GM10248 (cell line): ENCODE measurements at regions of chr18 and their contacts with region 1.

Region 1: GRCh38 chr18:48445540-48445939 is 36.4 kb upstream of the ZBTB7C start:
- DNase-seq: peak; percentile 62
- CTCF ChIP-seq: peak; percentile 92

Region 2: DNA sequence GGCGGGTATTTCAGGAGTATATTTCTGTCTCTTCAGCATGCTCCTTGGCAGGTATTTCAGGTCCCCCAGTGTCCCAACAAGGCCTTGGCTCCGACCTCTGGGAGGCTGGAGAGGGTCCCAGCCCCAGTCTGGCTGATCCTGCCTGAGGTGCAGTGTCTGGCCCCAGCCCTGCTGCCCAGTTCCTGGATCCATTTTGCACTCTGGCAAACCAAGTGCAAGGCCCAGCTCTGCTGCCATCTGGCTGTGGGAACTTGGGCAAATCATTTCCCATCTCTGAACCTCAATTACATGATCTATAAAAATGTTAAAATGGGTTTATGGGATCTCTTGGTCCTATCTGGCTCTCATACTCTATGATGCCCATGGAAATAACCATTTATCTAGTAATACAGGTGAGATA is 99.9 kb before region 1 on chr18:
- CTCF ChIA-PET with region 1: no interaction called
- POLR2A ChIA-PET with region 1: no interaction called
- DNase-seq: no peak
- CTCF ChIP-seq: no peak

Region 3: DNA sequence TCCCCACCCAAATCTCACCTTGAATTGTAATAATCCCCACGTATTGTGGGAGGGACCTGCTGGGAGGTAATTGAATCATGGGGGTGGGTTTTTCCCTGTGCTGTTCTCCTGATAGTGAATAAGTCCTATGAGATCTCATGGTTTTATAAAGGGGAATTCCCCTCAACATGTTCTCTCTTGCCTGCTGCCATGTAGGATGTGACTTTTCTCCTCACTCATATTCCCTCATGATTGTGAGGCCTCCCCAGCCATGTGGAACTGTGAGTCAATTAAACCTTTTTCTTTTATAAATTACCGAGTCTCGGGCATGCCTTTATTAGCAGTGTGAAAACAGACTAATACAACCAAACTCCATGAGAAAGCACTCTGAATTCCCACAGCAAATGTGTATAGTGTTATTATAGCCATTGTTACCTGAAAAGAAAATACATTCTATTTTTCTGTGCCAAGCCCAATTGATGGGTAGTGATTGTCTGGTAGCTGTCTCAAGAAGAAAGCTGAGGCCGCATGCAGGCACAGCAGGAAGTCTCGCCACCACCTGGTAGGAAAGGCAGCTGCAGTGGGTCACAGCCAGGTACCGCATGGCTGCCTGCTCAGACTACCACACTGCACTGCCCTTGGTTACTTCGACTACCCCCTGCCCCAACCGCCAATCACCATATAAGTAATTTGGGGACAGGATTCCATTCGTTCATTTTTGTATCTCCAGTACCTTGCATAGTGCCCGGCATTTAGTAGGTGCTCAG is 26.1 kb before region 1 on chr18:
- CTCF ChIA-PET with region 1: interaction called, 11 read pairs
- POLR2A ChIA-PET with region 1: no interaction called
- DNase-seq: no peak
- CTCF ChIP-seq: no peak

Region 4: GRCh38 chr18:48428475-48429177 is 16.9 kb before region 1 on chr18:
- CTCF ChIA-PET with region 1: interaction called, 30 read pairs
- POLR2A ChIA-PET with region 1: no interaction called
- DNase-seq: no peak
- CTCF ChIP-seq: no peak

Region 5: GRCh38 chr18:48455555-48456478 is 10.3 kb after region 1 on chr18:
- CTCF ChIA-PET with region 1: interaction called, 33 read pairs
- POLR2A ChIA-PET with region 1: no interaction called
- DNase-seq: no peak
- CTCF ChIP-seq: no peak

Region 6: DNA sequence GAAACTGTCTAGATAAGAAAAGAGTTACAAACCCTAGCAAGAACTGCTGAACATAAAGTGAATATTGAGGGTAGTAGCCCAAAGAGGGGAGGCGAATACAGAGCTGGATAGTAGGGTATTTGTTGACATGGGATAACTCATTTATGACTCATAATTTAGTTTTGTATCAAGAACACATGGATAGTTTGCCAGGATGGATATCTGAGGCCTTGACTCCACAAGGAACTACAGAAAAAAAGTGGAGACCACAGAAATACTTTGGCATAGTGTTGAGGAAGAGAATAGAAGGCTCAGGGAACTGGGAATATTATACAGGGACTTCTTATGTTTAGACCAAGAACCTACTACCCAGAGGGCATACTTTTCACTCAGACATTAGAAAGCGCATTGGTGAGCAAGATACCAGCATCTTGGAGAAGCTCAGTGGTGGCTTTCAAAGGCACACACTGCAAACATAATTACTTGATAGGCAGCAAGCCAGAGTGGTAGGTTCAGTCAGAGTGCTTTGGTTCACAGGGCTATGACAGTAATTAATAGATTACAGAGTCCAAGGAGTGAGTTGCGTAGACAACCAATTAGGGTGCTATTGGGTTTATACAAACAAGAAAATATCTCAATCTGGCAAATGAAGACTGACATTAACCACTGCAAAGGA is 15.5 kb after region 1 on chr18:
- CTCF ChIA-PET with region 1: interaction called, 33 read pairs
- POLR2A ChIA-PET with region 1: no interaction called
- DNase-seq: no peak
- CTCF ChIP-seq: no peak

Region 7: DNA sequence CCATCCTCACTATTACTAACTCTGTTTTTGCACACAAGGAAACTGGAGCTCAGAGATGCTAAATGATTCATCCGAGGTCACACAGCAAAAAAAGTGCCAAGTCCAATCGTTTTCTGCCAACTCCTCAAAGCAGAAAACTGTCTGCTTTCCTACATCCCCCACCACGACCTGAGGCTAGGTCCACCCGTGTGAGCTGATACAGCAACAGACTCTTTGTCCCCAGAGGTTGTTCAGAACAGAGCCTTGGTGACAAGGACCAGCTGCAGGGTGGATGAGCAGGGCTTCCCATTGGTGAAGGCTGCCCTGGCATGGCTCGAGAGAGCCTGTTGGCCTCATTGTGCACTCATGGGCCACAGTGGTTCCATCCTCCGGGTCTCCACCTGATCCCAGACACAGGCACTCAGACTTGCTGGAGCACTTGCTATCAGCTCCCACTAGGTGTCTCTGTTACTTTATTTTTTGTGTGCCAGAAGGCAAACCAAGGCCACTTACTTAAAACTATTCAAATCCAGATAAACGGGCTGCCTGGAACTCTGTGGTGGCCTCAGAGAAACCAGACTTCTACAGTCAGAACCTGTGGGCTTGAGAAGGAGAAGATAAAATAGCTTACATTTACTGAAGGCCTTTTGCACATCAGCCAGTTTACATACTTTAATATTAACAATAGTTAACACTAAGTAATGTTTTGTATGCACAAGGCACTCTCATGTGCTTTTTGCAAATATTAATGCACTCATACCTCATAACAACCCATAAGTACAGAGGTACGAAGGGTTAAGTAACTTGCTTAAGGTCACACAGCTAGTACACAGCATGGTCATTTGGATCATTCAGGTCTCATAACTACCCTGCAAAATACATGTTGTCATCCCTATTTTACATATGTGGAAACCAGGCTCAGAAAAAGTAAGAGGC is 30.4 kb after region 1 on chr18:
- CTCF ChIA-PET with region 1: interaction called, 12 read pairs
- POLR2A ChIA-PET with region 1: no interaction called
- DNase-seq: peak; percentile 70
- CTCF ChIP-seq: peak; percentile 74

Region 8: DNA sequence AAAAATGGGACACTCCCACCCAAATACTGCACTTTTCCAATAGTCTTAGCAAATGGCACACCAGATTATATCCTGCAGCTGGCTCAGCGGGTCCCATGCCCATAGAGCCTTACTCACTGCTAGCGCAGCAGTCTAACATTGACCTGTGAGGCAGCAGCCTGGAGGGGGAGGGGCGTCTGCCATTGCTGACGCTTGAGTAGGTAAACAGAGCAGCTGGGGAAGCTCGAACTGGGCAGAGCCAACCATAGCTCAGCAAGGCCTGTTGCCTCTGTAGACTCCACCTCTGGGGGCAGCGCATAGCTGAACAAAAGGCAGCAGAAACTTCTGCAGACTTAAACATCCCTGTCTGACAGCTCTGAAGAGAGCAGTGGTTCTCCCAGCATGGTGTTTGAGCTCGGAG is 203.7 kb after region 1 on chr18:
- CTCF ChIA-PET with region 1: no interaction called
- POLR2A ChIA-PET with region 1: no interaction called
- DNase-seq: no peak
- CTCF ChIP-seq: no peak